H1 (cell line): ENCODE measurements at regions of chr5 and their contacts with region 1.

Region 1: GRCh38 chr5:146041180-146041789 is 64.1 kb downstream of the PLAC8L1 start:
- DNase-seq: no peak
- H3K4me3 ChIP-seq: no peak overlapping the region
- H3K27ac ChIP-seq: no peak overlapping the region
- H3K4me1 ChIP-seq: no peaks in the 10 kb centered on the region
- H3K27me3 ChIP-seq: no peaks in the 10 kb centered on the region
- CTCF ChIP-seq: peak in 2 of 3 experiments; percentile 34 to 52; a peak in 2 of 4 replicates
- EP300 ChIP-seq: no peak
- POLR2A ChIP-seq: no peak
- RAD21 ChIP-seq: peak; percentile 37 to 41

Region 2: DNA sequence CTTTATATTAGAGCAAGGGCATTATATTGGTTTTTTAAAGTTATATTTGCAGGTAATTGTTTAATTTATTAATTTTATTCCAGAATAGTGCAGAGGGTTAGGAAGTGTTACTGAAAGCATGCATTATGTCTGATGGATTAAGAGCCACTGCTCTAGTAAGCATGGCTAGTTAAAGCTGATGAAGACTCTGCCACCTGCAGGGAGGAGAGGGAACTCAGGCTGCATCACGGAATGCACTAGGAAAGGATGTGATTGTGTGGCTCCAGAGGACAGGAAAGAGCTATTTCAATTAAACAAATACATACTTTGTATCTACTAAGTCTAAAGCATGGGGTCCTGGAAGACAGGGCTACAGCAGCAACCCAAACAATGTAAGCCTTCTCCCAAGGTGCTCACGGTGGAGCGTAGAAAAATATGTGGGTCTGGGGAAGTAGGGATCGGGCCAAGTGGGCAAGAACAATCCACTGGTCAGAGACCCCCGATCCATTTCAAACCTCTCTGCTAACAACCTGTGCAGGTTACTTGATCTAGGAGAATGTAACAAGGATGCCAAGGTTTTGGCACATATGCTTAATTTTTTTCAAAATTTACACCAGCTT is 153.2 kb before region 1 on chr5:
- CTCF ChIA-PET with region 1: interaction called, 10 read pairs
- POLR2A ChIA-PET with region 1: no interaction called
- DNase-seq: peak; percentile 21 to 61
- H3K4me3 ChIP-seq: no peak overlapping the region
- H3K27ac ChIP-seq: no peak overlapping the region
- H3K4me1 ChIP-seq: peaks cover 0 to 2% (median 0%) of the 10 kb centered on the region in 4 experiments; a peak in 1 of 7 replicates
- H3K27me3 ChIP-seq: no peaks in the 10 kb centered on the region
- CTCF ChIP-seq: peak; percentile 58 to 93 (median 73)
- EP300 ChIP-seq: no peak
- POLR2A ChIP-seq: no peak
- RAD21 ChIP-seq: peak; percentile 64 to 68

Region 3: GRCh38 chr5:145917288-145917687 is 124.0 kb before region 1 on chr5:
- CTCF ChIA-PET with region 1: interaction called, 12 read pairs
- POLR2A ChIA-PET with region 1: no interaction called
- DNase-seq: no peak
- H3K4me3 ChIP-seq: no peak overlapping the region
- H3K27ac ChIP-seq: no peak overlapping the region
- H3K4me1 ChIP-seq: peaks cover 0 to 4% (median 0%) of the 10 kb centered on the region in 4 experiments; a peak in 2 of 7 replicates
- H3K27me3 ChIP-seq: no peaks in the 10 kb centered on the region
- CTCF ChIP-seq: no peak
- EP300 ChIP-seq: no peak
- POLR2A ChIP-seq: no peak
- RAD21 ChIP-seq: no peak

Region 4: DNA sequence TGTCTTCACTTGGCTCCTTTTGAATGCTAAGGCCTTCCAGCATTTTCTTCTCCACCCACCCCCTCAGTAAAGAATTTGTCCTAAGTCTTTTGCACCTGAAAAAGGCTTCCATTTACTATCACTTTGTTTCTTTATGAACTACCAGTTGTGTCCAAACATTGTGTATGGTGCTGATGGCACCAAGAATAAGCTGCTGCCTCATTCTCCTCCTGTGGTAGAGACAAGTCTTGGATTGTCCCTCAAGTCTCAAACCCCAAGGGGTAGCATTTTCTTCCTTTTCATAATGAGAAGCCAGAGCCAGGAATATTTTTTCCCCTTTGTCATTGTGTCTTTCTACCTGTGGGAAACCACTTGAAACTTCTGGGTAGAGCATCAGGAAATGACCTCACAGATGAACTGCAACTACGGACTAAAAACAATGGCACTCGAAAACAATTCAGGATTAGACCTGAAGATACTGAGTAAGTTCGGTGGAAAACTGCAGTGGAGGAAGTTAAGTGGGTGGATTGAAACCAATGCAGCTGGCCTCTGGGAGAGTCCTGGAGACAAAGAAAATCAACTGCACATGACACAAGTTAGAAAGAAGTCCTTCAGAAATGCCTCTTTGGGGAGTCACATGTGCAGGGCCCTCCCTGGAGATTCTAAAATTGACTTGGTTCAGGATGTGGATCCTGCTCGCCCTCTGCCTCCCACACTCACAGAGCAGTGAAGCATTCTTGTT is 24.4 kb before region 1 on chr5:
- CTCF ChIA-PET with region 1: interaction called, 10 read pairs
- POLR2A ChIA-PET with region 1: no interaction called
- DNase-seq: no peak
- H3K4me3 ChIP-seq: no peak overlapping the region
- H3K27ac ChIP-seq: no peak overlapping the region
- H3K4me1 ChIP-seq: no peaks in the 10 kb centered on the region
- H3K27me3 ChIP-seq: no peaks in the 10 kb centered on the region
- CTCF ChIP-seq: no peak
- EP300 ChIP-seq: no peak
- POLR2A ChIP-seq: no peak
- RAD21 ChIP-seq: no peak

Region 5: DNA sequence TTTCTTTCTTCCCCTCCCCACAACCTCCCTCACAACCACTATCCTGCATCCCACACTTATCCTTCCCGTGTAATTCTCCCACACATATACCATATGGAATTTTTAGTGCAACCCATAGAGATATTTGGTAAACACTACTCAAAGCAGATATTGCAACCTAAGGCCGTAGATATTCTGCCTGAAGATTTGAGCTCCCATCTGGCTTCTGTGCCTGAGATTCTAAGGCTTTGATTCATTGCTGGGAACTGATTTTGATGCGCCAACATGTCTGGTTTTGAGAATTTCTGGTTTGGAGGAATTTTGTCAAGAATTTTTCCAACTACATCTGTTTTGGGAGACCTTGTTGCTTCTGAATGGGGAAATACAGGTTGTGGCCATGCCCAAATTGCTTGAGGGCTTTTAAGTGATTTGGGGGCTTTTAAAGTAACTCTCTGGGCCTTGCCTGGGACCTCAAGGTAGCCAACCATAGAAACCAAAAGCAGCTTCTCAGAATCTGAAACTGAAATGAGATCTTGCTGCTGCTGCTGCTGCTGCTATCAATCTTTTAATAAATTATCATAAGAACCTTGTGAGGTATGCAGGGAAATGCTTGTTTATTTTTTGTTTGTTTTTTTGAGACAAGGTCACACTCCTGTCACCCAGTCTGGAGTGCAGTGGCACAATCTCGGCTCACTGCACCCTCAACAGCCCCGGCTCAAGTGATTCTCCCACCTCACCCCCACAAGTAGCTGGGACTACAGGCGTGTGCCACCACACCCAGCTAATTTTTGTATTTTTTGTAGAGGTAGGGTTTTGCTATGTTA is 27.9 kb after region 1 on chr5:
- CTCF ChIA-PET with region 1: interaction called, 16 read pairs
- POLR2A ChIA-PET with region 1: interaction called, 3 read pairs
- DNase-seq: no peak
- H3K4me3 ChIP-seq: no peak overlapping the region
- H3K27ac ChIP-seq: no peak overlapping the region
- H3K4me1 ChIP-seq: peaks cover 6 to 14% (median 10%) of the 10 kb centered on the region in 4 experiments; a peak in 6 of 7 replicates
- H3K27me3 ChIP-seq: no peaks in the 10 kb centered on the region; a peak in 2 of 7 replicates
- CTCF ChIP-seq: no peak
- EP300 ChIP-seq: no peak
- POLR2A ChIP-seq: no peak
- RAD21 ChIP-seq: no peak